Naive thymus-derived CD4-positive, alpha-beta T cell (primary cell): ENCODE measurements at regions of chr1 and their contacts with region 1.

Region 1: DNA sequence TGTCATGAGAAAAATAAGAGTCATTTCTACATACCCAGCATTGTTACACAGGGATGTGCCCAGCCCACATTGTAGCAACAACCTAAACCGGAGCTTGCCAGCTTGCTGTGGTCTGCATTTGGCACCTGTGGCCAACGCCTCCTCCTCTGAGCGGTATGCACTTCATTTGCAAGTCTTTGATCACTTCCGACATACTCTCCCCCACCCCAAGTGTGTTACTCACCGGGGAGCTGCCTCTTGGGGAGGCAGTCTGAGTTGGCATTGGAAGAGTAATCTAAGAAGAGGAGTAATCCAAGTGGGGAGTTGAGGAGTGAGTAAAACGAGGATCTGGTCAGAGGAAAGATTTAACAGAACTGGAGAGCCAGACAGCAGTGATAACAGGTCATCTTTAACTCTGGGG is 3.8 kb downstream of the BCL9 start:
- DNase-seq: peak; percentile 43 to 92 (median 86)
- ATAC-seq: peak; percentile 86
- H3K4me3 ChIP-seq: peak overlapping the region; percentile 17
- H3K4me3 Mint-ChIP-seq: peak overlapping the region in 4 of 10 donors; percentile 52 to 79 (median 64)
- H3K27ac ChIP-seq: peak overlapping the region; percentile 26
- H3K27ac Mint-ChIP-seq: peak overlapping the region in 2 of 9 donors; percentile 44 to 65
- H3K4me1 ChIP-seq: peaks cover 43 to 45% of the 10 kb centered on the region in 2 donors
- H3K4me1 Mint-ChIP-seq: peaks cover 45 to 74% (median 69%) of the 10 kb centered on the region in 7 donors
- H3K27me3 ChIP-seq: peaks cover 0 to 4% of the 10 kb centered on the region in 2 donors
- H3K27me3 Mint-ChIP-seq: peaks cover 0 to 3% (median 0%) of the 10 kb centered on the region in 5 donors

Region 2: GRCh38 chr1:147494998-147495580 is 50.0 kb before region 1 on chr1:
- CTCF ChIA-PET with region 1: interaction called, 4 read pairs
- POLR2A ChIA-PET with region 1: no interaction called
- intact Hi-C with region 1: loop called (anchors 1 to 5 kb)
- DNase-seq: peak; percentile 27 to 73 (median 65)
- ATAC-seq: peak; percentile 94
- H3K4me3 ChIP-seq: no peak overlapping the region
- H3K4me3 Mint-ChIP-seq: peak overlapping the region in 1 of 10 donors; percentile 49
- H3K27ac ChIP-seq: no peak overlapping the region
- H3K27ac Mint-ChIP-seq: peak overlapping the region in 1 of 9 donors; percentile 33
- H3K4me1 ChIP-seq: no peaks in the 10 kb centered on the region
- H3K4me1 Mint-ChIP-seq: peaks cover 0 to 7% (median 0%) of the 10 kb centered on the region in 7 donors
- H3K27me3 ChIP-seq: peaks cover 0 to 4% of the 10 kb centered on the region in 2 donors
- H3K27me3 Mint-ChIP-seq: peaks cover 0 to 18% (median 0%) of the 10 kb centered on the region in 5 donors

Region 3: GRCh38 chr1:147527941-147528936 is 16.9 kb before region 1 on chr1:
- CTCF ChIA-PET with region 1: no interaction called
- POLR2A ChIA-PET with region 1: interaction called, 29 read pairs
- intact Hi-C with region 1: loop called in 1 of 2 experiments (anchors 2 kb)
- DNase-seq: peak in 7 of 9 donors; percentile 17 to 56 (median 47)
- ATAC-seq: peak; percentile 82
- H3K4me3 ChIP-seq: no peak overlapping the region
- H3K4me3 Mint-ChIP-seq: no peak overlapping the region
- H3K27ac ChIP-seq: peak overlapping the region; percentile 28
- H3K27ac Mint-ChIP-seq: no peak overlapping the region
- H3K4me1 ChIP-seq: peaks cover 0 to 11% of the 10 kb centered on the region in 2 donors
- H3K4me1 Mint-ChIP-seq: peaks cover 0 to 3% (median 0%) of the 10 kb centered on the region in 7 donors
- H3K27me3 ChIP-seq: no peaks in the 10 kb centered on the region
- H3K27me3 Mint-ChIP-seq: no peaks in the 10 kb centered on the region

Region 4: DNA sequence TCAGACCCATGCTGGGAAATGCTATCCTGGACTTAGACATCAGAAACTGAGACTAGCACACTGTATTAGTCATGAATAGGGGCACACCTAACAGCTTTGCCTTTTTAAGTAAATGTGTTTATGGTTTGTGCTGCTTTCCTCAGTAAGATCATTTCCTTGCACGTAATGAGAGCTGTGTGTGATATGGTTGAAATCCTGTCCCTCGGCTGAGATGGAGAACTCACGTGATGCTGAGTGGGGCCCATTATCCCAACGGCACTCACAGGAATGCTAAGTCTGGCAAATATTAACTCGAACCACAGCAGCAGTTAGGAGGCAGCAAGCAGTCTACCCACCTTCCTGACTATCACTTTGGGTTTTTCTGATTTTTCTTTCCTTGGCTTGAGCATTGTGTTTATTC is 34.4 kb after region 1 on chr1:
- CTCF ChIA-PET with region 1: interaction called, 4 read pairs
- POLR2A ChIA-PET with region 1: interaction called, 6 read pairs
- intact Hi-C with region 1: loop called (anchors 1 to 2 kb)
- DNase-seq: no peak
- ATAC-seq: no peak
- H3K4me3 ChIP-seq: no peak overlapping the region
- H3K4me3 Mint-ChIP-seq: peak overlapping the region in 9 of 10 donors; percentile 50 to 73 (median 60)
- H3K27ac ChIP-seq: no peak overlapping the region
- H3K27ac Mint-ChIP-seq: peak overlapping the region in 4 of 9 donors; percentile 4 to 39 (median 23)
- H3K4me1 ChIP-seq: peaks cover 13 to 17% of the 10 kb centered on the region in 2 donors
- H3K4me1 Mint-ChIP-seq: peaks cover 17 to 39% (median 30%) of the 10 kb centered on the region in 7 donors
- H3K27me3 ChIP-seq: peaks cover 0 to 5% of the 10 kb centered on the region in 2 donors
- H3K27me3 Mint-ChIP-seq: peaks cover 0 to 50% (median 39%) of the 10 kb centered on the region in 5 donors

Region 5: DNA sequence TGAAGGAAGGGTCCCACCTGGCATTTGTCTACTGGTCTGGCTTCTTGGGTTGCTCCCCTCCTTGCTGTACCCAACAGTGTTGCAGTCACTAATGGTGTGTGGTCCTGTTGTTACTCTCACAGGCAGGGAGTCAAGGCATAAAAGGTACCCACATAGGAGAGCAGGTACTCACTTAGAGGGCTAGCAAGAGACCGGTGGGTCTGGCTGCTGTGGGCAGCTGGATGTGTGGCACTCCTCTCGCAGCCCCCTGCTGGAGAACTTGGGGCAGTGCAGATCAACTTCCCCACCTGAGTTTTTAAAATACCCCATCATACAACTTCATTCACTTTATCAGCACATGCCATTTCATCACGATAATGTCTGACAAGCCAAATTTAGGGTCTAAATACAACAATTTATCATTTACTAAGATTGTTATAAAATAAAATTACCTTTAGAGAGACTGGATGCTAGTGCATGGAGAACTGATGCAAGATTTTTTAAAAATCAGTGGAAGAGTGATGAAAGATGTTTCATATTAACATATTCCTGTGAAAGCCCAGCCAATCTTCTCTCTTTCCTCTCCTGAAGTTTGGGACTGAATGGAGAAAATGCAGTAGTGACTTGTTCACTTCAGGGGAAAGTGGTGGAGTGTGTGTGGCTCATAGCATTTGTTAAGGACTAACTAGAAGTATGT is 82.4 kb after region 1 on chr1:
- CTCF ChIA-PET with region 1: interaction called, 4 read pairs
- POLR2A ChIA-PET with region 1: no interaction called
- intact Hi-C with region 1: loop called in 1 of 2 experiments (anchors 1 kb)
- DNase-seq: peak; percentile 24 to 63 (median 44)
- ATAC-seq: peak; percentile 79
- H3K4me3 ChIP-seq: no peak overlapping the region
- H3K4me3 Mint-ChIP-seq: peak overlapping the region in 1 of 10 donors; percentile 20
- H3K27ac ChIP-seq: no peak overlapping the region
- H3K27ac Mint-ChIP-seq: no peak overlapping the region
- H3K4me1 ChIP-seq: peaks cover 0 to 34% of the 10 kb centered on the region in 2 donors
- H3K4me1 Mint-ChIP-seq: peaks cover 23 to 42% (median 35%) of the 10 kb centered on the region in 7 donors
- H3K27me3 ChIP-seq: no peaks in the 10 kb centered on the region
- H3K27me3 Mint-ChIP-seq: no peaks in the 10 kb centered on the region

Region 6: DNA sequence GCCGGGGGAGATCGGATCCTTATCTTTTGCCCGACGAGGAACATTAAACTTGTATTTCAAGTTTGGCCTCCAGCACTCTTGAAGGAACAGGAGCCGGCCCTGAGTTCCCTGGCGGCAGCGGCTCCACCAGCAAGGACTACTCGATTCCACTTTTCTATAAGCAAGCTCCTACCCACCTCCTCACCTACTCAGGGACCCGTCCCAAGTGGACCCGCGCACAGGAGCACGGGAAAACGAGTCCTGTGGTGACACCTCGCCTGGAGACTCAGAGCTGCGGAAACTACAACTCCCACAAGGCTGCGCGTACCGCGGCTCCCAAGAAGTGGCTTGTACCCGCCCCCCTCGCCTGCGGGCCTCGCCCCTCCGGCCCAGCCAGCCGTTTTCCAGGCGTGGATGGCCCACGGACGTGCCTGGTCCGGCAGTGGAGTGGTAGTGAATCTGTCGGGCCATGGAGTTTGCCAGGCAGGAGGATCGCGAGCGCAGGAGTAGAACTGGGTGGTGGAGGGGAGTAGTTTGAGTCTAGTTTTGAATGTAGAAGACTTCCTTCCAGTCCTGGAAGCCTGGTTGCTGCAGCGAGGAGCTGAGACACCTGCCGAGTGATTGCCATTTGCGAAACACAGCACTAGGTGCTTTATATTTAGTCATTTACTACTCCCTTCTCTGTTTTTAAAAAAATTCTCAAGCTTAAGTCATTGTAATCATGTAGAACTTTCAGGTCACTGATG is 125.3 kb after region 1 on chr1 and contains the start of gene ACP6:
- CTCF ChIA-PET with region 1: no interaction called
- POLR2A ChIA-PET with region 1: interaction called, 3 read pairs
- intact Hi-C with region 1: loop called in 1 of 2 experiments (anchors 1 kb)
- DNase-seq: peak; percentile 61 to 86 (median 82)
- ATAC-seq: peak; percentile 98
- H3K4me3 ChIP-seq: peak within 1 kb of the TSS; percentile 78
- H3K4me3 Mint-ChIP-seq: peak within 1 kb of the TSS; percentile 93 to 98 (median 97)
- H3K27ac ChIP-seq: peak within 1 kb of the TSS; percentile 69
- H3K27ac Mint-ChIP-seq: peak within 1 kb of the TSS; percentile 83 to 94 (median 89)
- H3K4me1 ChIP-seq: peaks cover 0 to 7% of the 10 kb centered on the region in 2 donors
- H3K4me1 Mint-ChIP-seq: peaks cover 15 to 38% (median 29%) of the 10 kb centered on the region in 7 donors
- H3K27me3 ChIP-seq: no peaks in the 10 kb centered on the region
- H3K27me3 Mint-ChIP-seq: peaks cover 0 to 27% (median 12%) of the 10 kb centered on the region in 5 donors
- total RNA-seq, gene ACP6: 10.3 to 22.4 (median 16.6) TPM